T-cell (primary cell): ENCODE measurements at regions of chr7 and their contacts with region 1.

Region 1: DNA sequence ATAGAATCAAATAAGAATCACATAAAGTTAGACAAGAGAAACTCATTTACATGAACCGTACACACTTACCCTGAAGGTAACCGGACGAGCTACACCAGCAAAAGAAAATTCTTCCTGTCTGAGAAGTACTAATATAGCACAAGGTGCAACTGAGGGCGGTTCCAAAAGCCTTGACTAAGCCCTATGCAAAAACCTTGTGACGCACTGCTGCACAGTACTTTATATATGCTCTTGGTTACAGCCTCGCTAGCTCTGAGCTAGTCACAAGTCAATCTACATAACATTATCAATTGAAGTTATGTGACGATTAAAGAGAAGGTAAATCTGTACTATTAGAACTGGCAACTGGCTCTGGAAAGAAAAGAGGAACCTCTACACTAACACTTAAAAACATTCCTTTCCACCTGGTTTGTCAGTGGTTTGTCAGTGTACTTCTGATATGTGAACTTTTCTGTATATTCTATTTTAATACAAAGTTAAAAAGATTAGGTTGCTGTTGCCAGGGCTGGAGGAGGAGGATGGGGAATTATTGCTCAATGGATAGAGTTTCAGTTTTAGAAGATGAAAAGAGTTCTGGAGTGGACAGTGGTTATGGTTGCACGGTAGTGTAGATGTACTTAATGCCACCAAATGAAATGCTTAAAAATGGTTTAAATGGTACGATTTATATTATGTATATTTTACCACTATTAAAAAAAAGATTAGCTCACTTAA is 21.6 kb downstream of the NT5C3A start:
- DNase-seq: peak; percentile 10 to 85 (median 68)
- ATAC-seq: peak; percentile 99 to 100 (median 100)
- H3K4me3 ChIP-seq: no peak overlapping the region
- H3K4me3 Mint-ChIP-seq: peak overlapping the region; percentile 72 to 79 (median 78)
- H3K27ac ChIP-seq: peak overlapping the region; percentile 75
- H3K27ac Mint-ChIP-seq: peak overlapping the region; percentile 91 to 92
- H3K4me1 ChIP-seq: peaks cover 6 to 19% of the 10 kb centered on the region in 2 experiments
- H3K4me1 Mint-ChIP-seq: peaks cover 64 to 66% (median 66%) of the 10 kb centered on the region in 3 donors
- H3K27me3 ChIP-seq: no peaks in the 10 kb centered on the region
- H3K27me3 Mint-ChIP-seq: no peaks in the 10 kb centered on the region

Region 2: DNA sequence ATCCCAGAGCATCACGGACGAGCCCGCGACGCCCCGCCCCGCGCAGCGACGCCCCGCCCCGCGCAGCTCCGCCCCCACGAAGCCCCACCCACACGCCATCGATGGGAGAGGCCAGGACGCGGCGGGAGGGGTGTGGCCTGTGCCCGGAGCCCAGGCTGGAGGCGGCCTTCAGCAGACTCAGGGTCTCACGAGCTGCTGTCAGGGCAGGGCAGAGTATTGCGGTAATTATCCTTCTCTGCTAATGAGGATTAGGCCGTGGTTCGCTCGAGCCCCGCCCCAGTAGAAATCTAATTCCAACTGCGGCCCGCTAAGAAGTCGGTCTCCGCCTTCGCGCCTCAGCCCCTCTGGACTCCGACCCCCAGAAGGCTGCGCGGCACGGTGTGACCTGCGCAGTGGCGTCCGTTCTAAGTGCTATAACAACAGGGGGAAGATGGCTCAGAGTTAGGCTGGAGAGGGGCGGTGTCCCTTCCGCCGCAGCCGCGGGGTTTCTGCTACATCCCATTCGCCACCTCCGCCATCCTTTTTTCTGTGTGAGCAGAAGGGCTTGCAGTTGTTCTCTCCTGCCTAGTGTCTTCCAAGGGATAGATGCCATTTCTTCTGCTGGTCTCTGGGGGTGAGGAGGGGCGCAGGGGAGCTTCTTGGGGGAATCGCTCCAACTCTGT is 22.0 kb after region 1 on chr7:
- CTCF ChIA-PET with region 1: interaction called in 1 of 2 experiments, 9 read pairs
- POLR2A ChIA-PET with region 1: interaction called in 1 of 2 experiments, 12 read pairs
- DNase-seq: peak; percentile 86 to 96 (median 90)
- ATAC-seq: peak; percentile 90 to 96 (median 92)
- H3K4me3 ChIP-seq: peak overlapping the region; percentile 79 to 90
- H3K4me3 Mint-ChIP-seq: peak overlapping the region; percentile 94 to 97 (median 95)
- H3K27ac ChIP-seq: peak overlapping the region; percentile 67
- H3K27ac Mint-ChIP-seq: peak overlapping the region; percentile 95 to 96
- H3K4me1 ChIP-seq: peaks cover 16 to 26% of the 10 kb centered on the region in 2 experiments
- H3K4me1 Mint-ChIP-seq: peaks cover 44 to 45% (median 45%) of the 10 kb centered on the region in 3 donors
- H3K27me3 ChIP-seq: no peaks in the 10 kb centered on the region
- H3K27me3 Mint-ChIP-seq: peaks cover 0 to 3% of the 10 kb centered on the region in 2 donors

Region 3: DNA sequence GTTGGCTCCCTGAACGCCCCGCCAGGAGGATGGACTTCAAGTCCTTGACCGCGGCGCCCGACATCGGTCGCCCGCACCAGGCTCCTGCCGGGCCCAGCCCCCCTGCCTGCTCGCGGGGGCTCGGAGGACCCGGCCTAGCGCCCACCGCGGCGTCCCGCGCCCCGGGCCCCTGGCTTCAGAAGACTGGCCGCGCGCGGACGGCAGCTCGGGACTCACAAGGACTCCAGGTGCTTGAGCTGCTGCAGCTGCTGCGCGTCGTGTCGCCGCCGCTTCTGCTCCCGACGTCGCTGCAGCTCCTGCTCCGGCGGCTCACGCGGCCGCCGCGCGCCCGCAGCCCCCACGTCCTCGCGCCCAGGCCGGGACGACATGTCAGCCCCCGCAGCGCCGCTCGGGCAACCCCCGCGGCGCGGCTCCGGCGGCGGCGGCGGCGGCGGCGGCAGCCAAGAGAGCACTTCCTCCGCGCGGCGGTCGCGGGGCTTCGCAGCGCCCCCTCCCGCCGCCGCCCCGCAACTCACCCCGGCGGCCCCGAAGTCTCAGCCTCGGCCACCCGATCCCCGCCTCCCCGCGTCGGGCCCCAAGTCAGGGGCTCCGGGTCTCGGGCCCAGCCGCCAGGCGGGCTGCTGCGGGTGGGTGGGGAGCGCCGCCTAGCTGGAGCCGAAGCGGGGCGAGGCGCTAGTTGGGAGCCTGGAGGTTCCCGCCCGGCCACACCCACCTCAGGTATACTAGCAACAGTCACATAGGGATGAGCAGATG is 68.2 kb after region 1 on chr7 and contains the start of gene RP9:
- CTCF ChIA-PET with region 1: interaction called, 18 to 19 read pairs
- POLR2A ChIA-PET with region 1: interaction called, 4 read pairs
- DNase-seq: peak; percentile 49 to 88 (median 69)
- ATAC-seq: peak; percentile 91 to 95 (median 94)
- H3K4me3 ChIP-seq: peak within 1 kb of the TSS; percentile 71 to 83
- H3K4me3 Mint-ChIP-seq: peak within 1 kb of the TSS; percentile 80 to 89 (median 83)
- H3K27ac ChIP-seq: peak within 1 kb of the TSS; percentile 36
- H3K27ac Mint-ChIP-seq: peak within 1 kb of the TSS; percentile 50 to 69
- H3K4me1 ChIP-seq: peaks cover 18 to 29% of the 10 kb centered on the region in 2 experiments
- H3K4me1 Mint-ChIP-seq: peaks cover 38 to 47% (median 45%) of the 10 kb centered on the region in 3 donors
- H3K27me3 ChIP-seq: peaks cover 0 to 2% of the 10 kb centered on the region in 2 experiments
- H3K27me3 Mint-ChIP-seq: peaks cover 5 to 16% of the 10 kb centered on the region in 2 donors
- total RNA-seq, gene RP9: 14.7 to 18.3 (median 17.0) TPM